ENCODE measurements at regions of chr19 and their contacts with region 1.

Region 1: DNA sequence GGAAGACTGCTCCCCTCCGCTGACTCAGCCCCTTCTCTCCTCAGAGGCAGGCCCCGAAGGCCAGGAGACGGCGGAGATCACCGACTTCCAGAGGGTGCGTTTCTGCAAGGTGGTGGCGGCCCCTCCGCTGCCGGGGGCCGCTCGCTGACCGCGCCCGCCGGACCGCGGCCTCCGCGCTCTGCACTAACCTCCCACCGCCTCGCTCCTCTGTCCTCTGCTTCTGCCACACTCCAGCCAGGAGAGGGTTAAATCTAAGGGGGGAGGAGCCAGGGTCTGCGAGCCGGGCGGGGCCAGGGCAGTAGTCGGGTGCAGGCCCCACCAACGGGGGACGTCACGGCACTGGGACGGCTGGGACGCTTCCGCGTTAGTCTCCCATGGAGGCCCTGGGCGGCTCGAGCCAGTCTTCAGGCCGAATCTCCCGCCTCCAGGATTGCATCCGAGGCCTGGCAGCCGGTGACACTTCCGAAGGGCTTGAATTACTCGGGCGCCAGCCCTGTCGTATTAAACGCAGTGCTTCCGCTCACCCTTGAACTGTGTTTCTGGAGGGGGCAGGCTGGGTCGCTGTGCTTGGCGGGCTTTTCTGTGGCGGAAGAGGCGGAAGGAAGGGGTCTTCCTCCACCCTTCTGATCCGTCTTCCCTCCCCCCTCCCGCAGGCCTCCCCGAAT is 1.2 kb upstream of the INAFM1 start:
- DNase-seq: peak; percentile 81 to 91 (median 88)
- ATAC-seq: peak; percentile 74
- H3K4me3 ChIP-seq: peak overlapping the region; percentile 100
- H3K4me3 Mint-ChIP-seq: peak overlapping the region; percentile 83 to 99 (median 95)
- H3K27ac ChIP-seq: peak overlapping the region; percentile 95
- H3K27ac Mint-ChIP-seq: peak overlapping the region; percentile 93 to 98 (median 97)
- H3K4me1 ChIP-seq: peaks cover 3 to 14% of the 10 kb centered on the region in 2 donors
- H3K4me1 Mint-ChIP-seq: peaks cover 20 to 28% (median 27%) of the 10 kb centered on the region in 7 donors
- H3K27me3 ChIP-seq: no peaks in the 10 kb centered on the region
- H3K27me3 Mint-ChIP-seq: no peaks in the 10 kb centered on the region

Region 2: DNA sequence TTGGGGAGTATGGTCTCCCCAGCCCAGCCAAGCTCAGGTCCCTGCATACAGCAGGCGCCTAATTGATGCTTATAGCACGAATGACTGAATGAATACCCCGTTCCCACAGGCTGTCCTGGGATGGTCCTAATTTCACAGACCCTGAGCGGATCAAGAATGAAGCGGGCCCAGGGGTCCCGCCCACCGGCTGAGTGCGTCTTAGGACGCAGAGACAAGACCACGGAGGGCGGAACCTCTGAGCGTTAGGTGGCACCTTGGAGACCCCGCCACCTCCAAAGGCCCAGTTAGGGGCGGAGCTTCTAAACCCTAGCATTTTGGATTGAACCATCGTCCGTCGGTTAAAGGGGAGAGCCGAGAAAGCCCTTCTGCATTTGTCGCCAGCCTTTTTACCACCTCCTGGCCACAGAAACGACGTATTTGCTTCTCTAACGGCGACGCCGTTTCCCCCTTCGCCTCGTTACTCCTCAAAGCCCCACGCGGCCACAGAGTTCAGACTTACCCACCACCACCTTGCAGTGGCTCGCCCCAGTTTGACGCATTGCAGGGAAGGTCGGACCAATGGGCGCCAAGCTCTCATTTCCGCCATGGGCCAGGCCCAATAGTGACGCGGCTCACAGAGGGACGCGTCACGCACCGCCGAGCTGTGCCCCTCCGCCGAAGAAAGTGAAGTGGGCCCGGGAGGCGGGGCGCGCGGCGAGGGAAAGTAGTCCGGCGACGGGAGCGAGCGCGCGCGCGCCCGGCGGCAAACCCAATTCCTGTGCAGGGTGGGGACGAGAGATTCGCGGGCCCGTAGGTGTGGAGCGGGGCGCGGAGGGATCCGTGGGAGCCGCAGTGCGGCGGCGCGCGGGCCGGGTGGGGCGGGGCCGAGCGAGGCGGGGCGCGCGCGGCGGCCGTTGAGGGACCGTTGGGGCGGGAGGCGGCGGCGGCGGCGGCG is 672.8 kb before region 1 on chr19:
- CTCF ChIA-PET with region 1: no interaction called
- POLR2A ChIA-PET with region 1: no interaction called
- intact Hi-C with region 1: loop called in 1 of 2 experiments (anchors 1 kb)
- DNase-seq: peak; percentile 96 to 99 (median 98)
- ATAC-seq: peak; percentile 91
- H3K4me3 ChIP-seq: peak overlapping the region; percentile 69
- H3K4me3 Mint-ChIP-seq: peak overlapping the region; percentile 95 to 100 (median 98)
- H3K27ac ChIP-seq: peak overlapping the region; percentile 99
- H3K27ac Mint-ChIP-seq: peak overlapping the region; percentile 100
- H3K4me1 ChIP-seq: peaks cover 15 to 30% of the 10 kb centered on the region in 2 donors
- H3K4me1 Mint-ChIP-seq: peaks cover 27 to 57% (median 46%) of the 10 kb centered on the region in 7 donors
- H3K27me3 ChIP-seq: no peaks in the 10 kb centered on the region
- H3K27me3 Mint-ChIP-seq: peaks cover 0 to 10% (median 0%) of the 10 kb centered on the region in 5 donors

Region 3: DNA sequence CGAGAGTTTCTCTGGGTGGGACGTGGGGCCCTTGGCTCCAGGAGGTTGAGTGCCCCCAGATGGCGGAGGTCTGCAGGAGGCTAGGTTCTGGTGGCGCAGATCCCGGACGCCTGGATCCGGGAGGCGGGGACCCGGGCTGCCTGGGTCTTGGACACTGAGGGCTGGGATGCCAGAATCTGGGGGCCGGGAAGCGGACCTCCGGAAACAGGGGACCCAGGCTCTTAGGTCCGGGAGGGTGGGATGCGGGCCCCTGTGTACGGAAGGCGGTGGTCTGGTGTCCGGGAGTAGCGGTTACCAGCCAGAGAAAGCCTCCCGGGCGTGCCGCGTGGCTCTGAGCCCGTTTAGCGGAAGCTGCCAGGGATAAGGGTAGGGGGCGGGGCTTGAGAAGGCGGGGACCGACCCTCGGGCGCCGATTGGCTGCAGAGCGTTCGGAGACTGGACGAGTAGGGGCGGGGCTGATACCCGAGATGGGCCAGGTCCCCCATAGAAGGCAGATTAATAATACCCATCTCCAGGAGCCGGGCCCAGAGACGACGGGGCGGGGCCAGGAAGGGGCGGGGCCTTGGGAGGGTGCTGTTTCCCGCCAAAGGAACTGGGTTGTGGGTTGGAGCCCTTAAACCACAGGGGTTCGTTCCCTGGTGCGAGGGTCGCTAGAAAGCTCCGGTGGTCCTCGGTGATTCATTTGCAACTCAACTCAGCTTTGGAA is 485.0 kb before region 1 on chr19 and contains the start of gene SLC1A5:
- CTCF ChIA-PET with region 1: interaction called, 3 read pairs
- POLR2A ChIA-PET with region 1: no interaction called
- intact Hi-C with region 1: loop called in 1 of 2 experiments (anchors 10 kb)
- DNase-seq: peak; percentile 77 to 98 (median 84)
- ATAC-seq: peak; percentile 93
- H3K4me3 ChIP-seq: peak within 1 kb of the TSS; percentile 77
- H3K4me3 Mint-ChIP-seq: peak within 1 kb of the TSS; percentile 85 to 91 (median 89)
- H3K27ac ChIP-seq: peak within 1 kb of the TSS; percentile 62
- H3K27ac Mint-ChIP-seq: peak within 1 kb of the TSS; percentile 25 to 92 (median 86)
- H3K4me1 ChIP-seq: peaks cover 31 to 44% of the 10 kb centered on the region in 2 donors
- H3K4me1 Mint-ChIP-seq: peaks cover 19 to 72% (median 60%) of the 10 kb centered on the region in 7 donors
- H3K27me3 ChIP-seq: no peaks in the 10 kb centered on the region
- H3K27me3 Mint-ChIP-seq: peaks cover 0 to 3% (median 0%) of the 10 kb centered on the region in 5 donors
- total RNA-seq, gene SLC1A5: 3.5 to 120 (median 5.3) TPM

Region 4: GRCh38 chr19:47225746-47226425 is 47.6 kb before region 1 on chr19:
- CTCF ChIA-PET with region 1: no interaction called
- POLR2A ChIA-PET with region 1: interaction called, 4 read pairs
- intact Hi-C with region 1: loop called (anchors 1 kb)
- DNase-seq: peak; percentile 72 to 94 (median 82)
- ATAC-seq: peak; percentile 76
- H3K4me3 ChIP-seq: peak overlapping the region; percentile 54
- H3K4me3 Mint-ChIP-seq: peak overlapping the region; percentile 31 to 84 (median 66)
- H3K27ac ChIP-seq: peak overlapping the region; percentile 81
- H3K27ac Mint-ChIP-seq: peak overlapping the region in 8 of 9 donors; percentile 26 to 96 (median 84)
- H3K4me1 ChIP-seq: peaks cover 28 to 31% of the 10 kb centered on the region in 2 donors
- H3K4me1 Mint-ChIP-seq: peaks cover 8 to 16% (median 11%) of the 10 kb centered on the region in 7 donors
- H3K27me3 ChIP-seq: no peaks in the 10 kb centered on the region
- H3K27me3 Mint-ChIP-seq: no peaks in the 10 kb centered on the region

Region 5: GRCh38 chr19:47284324-47284899 is 11.0 kb after region 1 on chr19:
- CTCF ChIA-PET with region 1: interaction called, 3 read pairs
- POLR2A ChIA-PET with region 1: no interaction called
- intact Hi-C with region 1: loop called in 1 of 2 experiments (anchors 1 kb)
- DNase-seq: peak in 7 of 9 donors; percentile 32 to 78 (median 61)
- ATAC-seq: peak; percentile 72
- H3K4me3 ChIP-seq: no peak overlapping the region
- H3K4me3 Mint-ChIP-seq: no peak overlapping the region
- H3K27ac ChIP-seq: no peak overlapping the region
- H3K27ac Mint-ChIP-seq: no peak overlapping the region
- H3K4me1 ChIP-seq: no peaks in the 10 kb centered on the region
- H3K4me1 Mint-ChIP-seq: peaks cover 0 to 16% (median 6%) of the 10 kb centered on the region in 7 donors
- H3K27me3 ChIP-seq: no peaks in the 10 kb centered on the region
- H3K27me3 Mint-ChIP-seq: no peaks in the 10 kb centered on the region

Region 6: GRCh38 chr19:47600246-47601179 is 327.1 kb after region 1 on chr19:
- CTCF ChIA-PET with region 1: no interaction called
- POLR2A ChIA-PET with region 1: no interaction called
- intact Hi-C with region 1: loop called (anchors 1 to 5 kb)
- DNase-seq: peak; percentile 86 to 99 (median 97)
- ATAC-seq: peak; percentile 98
- H3K4me3 ChIP-seq: peak overlapping the region; percentile 93
- H3K4me3 Mint-ChIP-seq: peak overlapping the region; percentile 79 to 91 (median 84)
- H3K27ac ChIP-seq: peak overlapping the region; percentile 81
- H3K27ac Mint-ChIP-seq: peak overlapping the region; percentile 75 to 94 (median 90)
- H3K4me1 ChIP-seq: peaks cover 0 to 7% of the 10 kb centered on the region in 2 donors
- H3K4me1 Mint-ChIP-seq: peaks cover 6 to 43% (median 21%) of the 10 kb centered on the region in 7 donors
- H3K27me3 ChIP-seq: no peaks in the 10 kb centered on the region
- H3K27me3 Mint-ChIP-seq: peaks cover 0 to 2% (median 0%) of the 10 kb centered on the region in 5 donors

Region 7: DNA sequence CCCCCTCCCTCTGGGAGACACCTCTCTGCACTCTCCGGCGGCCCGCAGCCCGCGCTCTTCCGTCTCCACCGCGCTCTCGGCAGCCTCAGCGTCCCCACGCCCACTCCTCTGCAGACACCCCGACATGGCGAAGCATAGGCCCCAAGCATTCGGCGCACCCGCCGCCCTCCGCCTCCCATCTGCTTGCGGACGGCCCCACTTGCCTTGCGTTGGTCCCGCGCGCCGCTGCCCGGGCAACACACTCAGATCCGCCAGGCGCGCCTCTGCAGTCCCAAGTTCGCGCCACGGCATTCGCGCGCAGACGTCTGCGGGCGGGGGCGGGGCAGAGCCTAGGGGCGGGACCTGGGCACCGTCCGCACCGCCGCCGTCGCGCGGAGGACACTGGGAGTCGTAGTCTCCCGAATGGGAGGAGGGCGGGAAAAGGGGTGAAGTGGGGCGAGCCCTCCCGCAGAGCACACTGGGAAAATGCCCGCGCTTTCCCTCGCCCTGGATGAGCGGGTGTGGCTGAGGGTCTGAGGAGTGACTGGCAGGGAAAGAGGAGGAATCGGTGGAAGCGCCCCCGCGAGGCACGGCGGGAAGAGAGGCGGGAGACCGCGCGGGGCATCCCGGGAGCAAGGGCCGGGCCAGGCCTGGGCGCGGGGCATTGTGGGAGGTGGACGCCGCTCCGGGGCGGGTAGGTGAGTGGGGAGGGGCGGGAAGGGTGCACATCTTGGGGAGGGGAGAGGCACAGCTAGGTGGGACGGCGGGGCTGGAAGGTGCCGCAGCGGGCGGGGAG is 896.8 kb after region 1 on chr19 and contains the starts of genes LIG1 and ZSWIM9:
- CTCF ChIA-PET with region 1: no interaction called
- POLR2A ChIA-PET with region 1: no interaction called
- intact Hi-C with region 1: loop called in 1 of 2 experiments (anchors 10 kb)
- DNase-seq: peak; percentile 87 to 96 (median 94)
- ATAC-seq: peak; percentile 89
- H3K4me3 ChIP-seq: peak within 1 kb of the TSS; percentile 98
- H3K4me3 Mint-ChIP-seq: peak within 1 kb of the TSS; percentile 90 to 100 (median 97)
- H3K27ac ChIP-seq: peak within 1 kb of the TSS; percentile 94
- H3K27ac Mint-ChIP-seq: peak within 1 kb of the TSS; percentile 92 to 100 (median 97)
- H3K4me1 ChIP-seq: peaks cover 14 to 16% of the 10 kb centered on the region in 2 donors
- H3K4me1 Mint-ChIP-seq: peaks cover 20 to 44% (median 32%) of the 10 kb centered on the region in 7 donors
- H3K27me3 ChIP-seq: no peaks in the 10 kb centered on the region
- H3K27me3 Mint-ChIP-seq: no peaks in the 10 kb centered on the region
- total RNA-seq, gene LIG1: 61.0 to 134 (median 122) TPM
- total RNA-seq, gene ZSWIM9: 5.0 to 11.6 (median 7.4) TPM

Measured in naive thymus-derived CD4-positive, alpha-beta T cell (primary cell).